PC-9 (cell line): ENCODE measurements at regions of chrX and their contacts with region 1.

Region 1: GRCh38 chrX:108070891-108071290 is 20.5 kb downstream of the PSMD10 start:
- DNase-seq: peak; percentile 19 to 73
- H3K4me3 ChIP-seq: no peak overlapping the region
- H3K27ac ChIP-seq: peak overlapping the region; percentile 44; the same call in 1 of the 2 replicates
- H3K4me1 ChIP-seq: peaks cover 19% of the 10 kb centered on the region
- H3K27me3 ChIP-seq: no peaks in the 10 kb centered on the region
- CTCF ChIP-seq: no peak

Region 2: DNA sequence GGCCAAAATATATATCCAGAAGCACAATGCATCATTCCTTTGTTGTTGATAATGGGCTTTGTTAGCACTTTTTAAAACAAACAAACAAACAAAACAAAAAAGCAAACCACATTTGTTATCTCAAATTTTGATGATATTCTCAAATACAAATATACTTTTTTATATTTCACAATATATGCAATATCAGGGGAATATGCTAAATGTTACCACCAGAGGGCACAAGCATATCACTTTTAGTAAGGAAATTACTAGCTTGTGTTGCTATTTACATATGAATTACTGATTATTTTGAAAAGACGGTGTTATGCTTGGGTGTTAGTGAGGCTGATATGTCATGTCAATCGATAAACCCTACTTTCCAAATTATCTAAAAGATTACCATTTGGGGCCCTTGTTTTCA is 1196.8 kb before region 1 on chrX:
- CTCF ChIA-PET with region 1: no interaction called
- POLR2A ChIA-PET with region 1: no interaction called
- intact Hi-C with region 1: loop called (anchors 5 kb)
- DNase-seq: peak in 1 of 2 experiments; percentile 38
- H3K4me3 ChIP-seq: no peak overlapping the region
- H3K27ac ChIP-seq: no peak overlapping the region
- H3K4me1 ChIP-seq: no peaks in the 10 kb centered on the region
- H3K27me3 ChIP-seq: no peaks in the 10 kb centered on the region
- CTCF ChIP-seq: peak; percentile 86

Region 3: DNA sequence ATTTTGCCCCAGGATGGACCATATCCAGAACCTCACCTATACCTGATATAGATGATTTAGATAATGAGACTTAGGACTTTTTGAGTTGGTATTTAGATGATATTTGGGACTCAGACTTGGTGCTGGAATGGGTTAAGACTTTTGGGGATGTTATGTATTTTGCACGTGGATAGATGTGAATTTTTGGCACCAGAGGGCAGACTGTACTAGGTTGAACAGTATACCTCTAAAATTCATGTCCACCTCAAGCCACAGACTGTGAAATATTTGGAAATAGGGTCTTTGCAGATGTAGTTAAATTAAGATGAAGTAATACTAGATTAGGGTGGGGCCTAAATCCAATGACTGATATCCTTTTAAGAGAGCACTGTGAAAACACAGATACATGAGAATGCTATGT is 967.9 kb before region 1 on chrX:
- CTCF ChIA-PET with region 1: no interaction called
- POLR2A ChIA-PET with region 1: no interaction called
- intact Hi-C with region 1: loop called (anchors 10 kb)
- DNase-seq: no peak
- H3K4me3 ChIP-seq: no peak overlapping the region
- H3K27ac ChIP-seq: no peak overlapping the region
- H3K4me1 ChIP-seq: no peaks in the 10 kb centered on the region
- H3K27me3 ChIP-seq: no peaks in the 10 kb centered on the region
- CTCF ChIP-seq: peak; percentile 64

Region 4: DNA sequence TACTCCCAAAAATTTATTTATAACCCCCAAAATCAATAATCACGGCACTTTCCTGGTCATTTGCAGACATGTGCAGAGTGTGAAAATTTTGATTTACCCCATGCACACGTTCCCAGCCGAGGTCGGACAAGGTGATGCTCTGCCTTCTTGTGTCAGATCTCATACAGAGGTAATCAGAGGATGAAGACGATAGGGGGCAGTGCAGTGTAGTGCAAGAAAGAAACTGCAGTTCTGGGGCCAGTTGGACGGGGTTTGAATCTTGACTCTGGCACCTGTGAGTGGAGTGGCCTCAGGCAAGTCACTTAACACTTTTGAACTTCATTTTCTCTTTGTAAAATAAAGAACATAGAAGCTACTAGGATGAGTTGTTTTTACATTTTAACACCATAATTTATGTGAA is 533.1 kb before region 1 on chrX:
- CTCF ChIA-PET with region 1: interaction called, 5 read pairs
- POLR2A ChIA-PET with region 1: no interaction called
- intact Hi-C with region 1: loop called (anchors 2 kb)
- DNase-seq: peak; percentile 40 to 52
- H3K4me3 ChIP-seq: no peak overlapping the region
- H3K27ac ChIP-seq: no peak overlapping the region
- H3K4me1 ChIP-seq: peaks cover 3% of the 10 kb centered on the region; the same call in 1 of the 2 replicates
- H3K27me3 ChIP-seq: no peaks in the 10 kb centered on the region
- CTCF ChIP-seq: peak; percentile 88

Region 5: GRCh38 chrX:107894038-107894437 is 176.9 kb before region 1 on chrX:
- CTCF ChIA-PET with region 1: no interaction called
- POLR2A ChIA-PET with region 1: no interaction called
- intact Hi-C with region 1: loop called (anchors 2 kb)
- DNase-seq: peak; percentile 32 to 74
- H3K4me3 ChIP-seq: no peak overlapping the region
- H3K27ac ChIP-seq: no peak overlapping the region
- H3K4me1 ChIP-seq: no peaks in the 10 kb centered on the region
- H3K27me3 ChIP-seq: no peaks in the 10 kb centered on the region
- CTCF ChIP-seq: peak; percentile 92

Region 6: GRCh38 chrX:107924136-107924746 is 146.7 kb before region 1 on chrX:
- CTCF ChIA-PET with region 1: no interaction called
- POLR2A ChIA-PET with region 1: no interaction called
- intact Hi-C with region 1: no loop called
- DNase-seq: no peak
- H3K4me3 ChIP-seq: no peak overlapping the region
- H3K27ac ChIP-seq: no peak overlapping the region
- H3K4me1 ChIP-seq: no peaks in the 10 kb centered on the region
- H3K27me3 ChIP-seq: no peaks in the 10 kb centered on the region
- CTCF ChIP-seq: no peak

Region 7: GRCh38 chrX:108020631-108021030 is 50.3 kb before region 1 on chrX:
- CTCF ChIA-PET with region 1: interaction called, 3 read pairs
- POLR2A ChIA-PET with region 1: no interaction called
- intact Hi-C with region 1: loop called (anchors 1 kb)
- DNase-seq: no peak
- H3K4me3 ChIP-seq: no peak overlapping the region
- H3K27ac ChIP-seq: no peak overlapping the region
- H3K4me1 ChIP-seq: peaks cover 14% of the 10 kb centered on the region; the same call in 1 of the 2 replicates
- H3K27me3 ChIP-seq: no peaks in the 10 kb centered on the region
- CTCF ChIP-seq: peak; percentile 76

Region 8: DNA sequence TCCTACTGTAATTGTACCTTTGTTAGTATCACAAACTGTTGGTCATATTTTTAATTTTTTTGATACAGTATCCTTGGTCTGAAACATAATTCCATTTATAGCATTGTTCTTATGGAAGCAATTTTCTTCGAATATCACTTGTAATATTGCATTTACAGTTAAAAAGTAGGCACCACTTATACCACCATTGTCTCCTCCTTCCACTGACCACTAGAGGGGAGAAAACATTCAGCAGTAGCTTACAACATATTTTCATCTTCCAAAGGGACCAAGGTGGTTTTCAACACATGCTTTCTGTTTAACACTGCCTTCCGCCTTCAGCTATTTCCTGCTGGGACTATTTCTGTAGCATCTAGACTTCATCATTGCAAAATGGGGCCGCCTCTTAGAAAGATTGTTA is 221.2 kb after region 1 on chrX:
- CTCF ChIA-PET with region 1: no interaction called
- POLR2A ChIA-PET with region 1: no interaction called
- intact Hi-C with region 1: no loop called
- DNase-seq: no peak
- H3K4me3 ChIP-seq: no peak overlapping the region
- H3K27ac ChIP-seq: no peak overlapping the region
- H3K4me1 ChIP-seq: no peaks in the 10 kb centered on the region
- H3K27me3 ChIP-seq: no peaks in the 10 kb centered on the region
- CTCF ChIP-seq: no peak; the same call in 1 of the 2 replicates